Activated CD4-positive, alpha-beta T cell treated with anti-CD3 and anti-CD28 coated beads, Interleukin-2, amount 10 ng/mL, durations not matched to agents 24 days and 14 days (primary cell): ENCODE measurements at regions of chr2 and their contacts with region 1.

Region 1: GRCh38 chr2:20299113-20299512 is 51.5 kb downstream of the PUM2 start:
- DNase-seq: no peak
- H3K4me3 Mint-ChIP-seq: no peak overlapping the region
- H3K27ac Mint-ChIP-seq: peak overlapping the region; percentile 48
- H3K4me1 Mint-ChIP-seq: peaks cover 27% of the 10 kb centered on the region
- H3K27me3 Mint-ChIP-seq: no peaks in the 10 kb centered on the region

Region 2: GRCh38 chr2:20157193-20157891 is 141.8 kb before region 1 on chr2:
- intact Hi-C with region 1: no loop called
- DNase-seq: no peak
- H3K4me3 Mint-ChIP-seq: no peak overlapping the region
- H3K27ac Mint-ChIP-seq: no peak overlapping the region
- H3K4me1 Mint-ChIP-seq: no peaks in the 10 kb centered on the region
- H3K27me3 Mint-ChIP-seq: peaks cover 24% of the 10 kb centered on the region

Region 3: DNA sequence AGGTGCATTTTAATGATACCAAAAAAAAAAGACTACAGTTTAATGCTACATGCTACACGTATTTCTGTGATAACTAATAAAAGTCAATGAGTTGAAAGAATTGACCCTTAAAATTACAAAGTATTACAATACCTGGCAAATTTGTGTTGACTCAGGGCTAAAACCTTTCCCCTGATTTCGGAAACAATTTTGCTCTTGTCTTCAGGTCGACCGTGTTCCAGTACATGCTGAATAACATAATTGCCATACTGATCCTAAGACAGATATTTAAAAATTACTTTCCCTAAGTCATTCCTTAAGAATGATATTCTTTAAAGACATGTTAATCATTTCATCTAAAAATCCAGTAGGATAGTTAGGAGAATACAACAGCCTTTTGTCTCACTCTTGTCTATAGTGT is 44.4 kb before region 1 on chr2:
- intact Hi-C with region 1: loop called (anchors 5 kb)
- DNase-seq: no peak
- H3K4me3 Mint-ChIP-seq: no peak overlapping the region
- H3K27ac Mint-ChIP-seq: no peak overlapping the region
- H3K4me1 Mint-ChIP-seq: no peaks in the 10 kb centered on the region
- H3K27me3 Mint-ChIP-seq: no peaks in the 10 kb centered on the region

Region 4: DNA sequence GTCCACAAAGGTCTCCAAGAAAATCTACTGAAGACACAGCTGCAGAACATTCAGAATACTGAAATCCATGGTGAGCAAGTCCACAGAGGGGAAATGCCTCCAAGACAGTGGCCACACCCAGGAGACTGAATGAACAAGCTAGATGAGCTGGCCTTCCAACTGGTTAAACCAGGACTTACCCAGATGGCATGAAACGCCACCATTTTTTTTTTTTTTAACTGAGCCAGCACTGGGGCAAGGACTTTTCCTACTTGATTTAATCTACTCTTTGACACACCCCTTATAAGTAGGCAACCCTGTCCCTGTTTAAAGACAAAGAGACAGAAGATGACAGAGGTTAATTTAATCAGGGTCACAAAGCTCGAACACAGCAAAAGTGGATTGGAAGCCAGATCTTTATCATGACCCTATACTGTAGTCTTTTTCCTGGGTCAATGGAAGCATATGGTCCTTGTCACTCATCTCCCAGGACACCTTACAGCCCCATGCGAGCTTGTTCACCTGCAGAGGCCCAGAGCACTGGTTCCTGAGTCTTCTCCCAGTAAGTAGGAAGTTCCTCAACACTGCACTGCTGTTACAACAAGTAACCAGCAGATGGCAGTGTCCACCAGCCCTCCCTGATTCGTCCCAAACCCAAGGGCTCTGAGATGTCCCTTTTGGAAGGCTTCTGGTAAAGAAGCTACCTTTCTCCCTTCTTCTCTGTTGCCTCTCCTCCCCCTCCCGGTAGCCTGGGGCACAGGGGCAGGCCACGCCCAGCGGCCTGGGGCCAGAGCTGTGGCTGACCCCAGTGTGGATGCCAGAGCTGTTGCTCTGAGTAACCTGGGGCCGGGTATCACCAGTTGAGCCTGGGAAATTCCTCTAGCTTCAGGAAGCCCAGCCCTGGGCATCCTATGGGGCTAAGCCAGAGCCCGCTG is 362.2 kb after region 1 on chr2:
- intact Hi-C with region 1: no loop called
- DNase-seq: peak; percentile 90
- H3K4me3 Mint-ChIP-seq: no peak overlapping the region
- H3K27ac Mint-ChIP-seq: no peak overlapping the region
- H3K4me1 Mint-ChIP-seq: peaks cover 2% of the 10 kb centered on the region
- H3K27me3 Mint-ChIP-seq: peaks cover 72% of the 10 kb centered on the region